ENCODE measurements at regions of chr5 and their contacts with region 1.

Region 1: DNA sequence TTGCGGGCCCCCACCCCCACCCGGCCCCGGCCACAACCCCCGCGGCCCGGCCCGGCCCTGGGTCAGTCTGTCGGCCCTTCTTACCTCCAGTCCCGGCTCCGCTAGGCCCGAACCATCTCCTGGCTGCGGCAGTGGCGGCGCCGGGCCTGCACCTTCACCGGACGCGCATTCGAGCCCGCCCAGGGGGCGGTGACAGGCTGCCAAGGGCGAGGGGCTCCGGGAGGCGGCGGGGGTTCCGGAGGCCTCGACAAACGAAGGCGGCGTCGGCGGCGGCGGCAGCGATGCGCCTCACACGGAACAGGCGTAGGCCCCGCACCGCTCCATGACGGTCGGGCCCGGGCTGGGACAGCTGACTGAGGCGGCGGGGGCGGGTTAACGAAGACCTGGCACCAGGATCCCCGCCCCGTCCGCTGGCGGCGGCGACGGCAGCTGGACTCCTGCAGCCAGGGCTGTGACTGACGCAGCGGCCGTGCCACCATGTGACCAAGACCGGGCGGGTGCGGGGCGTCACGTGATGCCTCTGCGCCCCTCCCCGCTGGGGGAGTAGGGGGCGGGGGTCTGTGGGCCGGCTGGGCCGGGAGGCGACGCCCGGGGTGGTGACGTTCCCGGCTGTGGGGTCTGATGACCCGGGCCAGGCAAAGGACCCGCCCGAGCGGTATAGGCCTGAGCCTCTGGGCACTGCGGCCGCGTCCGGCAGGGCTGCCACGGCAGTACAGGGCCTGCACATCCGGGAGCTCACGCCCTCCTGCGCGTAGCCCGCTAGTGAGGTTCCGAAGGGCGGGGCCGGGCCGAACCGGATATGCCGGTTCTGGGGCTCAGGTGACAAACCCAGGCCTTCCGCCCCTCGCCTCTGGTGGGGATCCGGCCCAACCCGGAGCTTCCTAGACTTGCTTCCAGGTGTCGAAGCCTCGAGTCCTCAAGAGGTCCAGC is at the start of gene AFF4:
- DNase-seq: peak; percentile 97
- H3K4me3 ChIP-seq: peak within 1 kb of the TSS; percentile 72 to 90 (median 82)
- H3K27ac ChIP-seq: peak within 1 kb of the TSS; percentile 98 to 100 (median 98)
- H3K4me1 ChIP-seq: peaks cover 4 to 35% (median 25%) of the 10 kb centered on the region in 4 donors
- H3K27me3 ChIP-seq: no peaks in the 10 kb centered on the region
- CTCF ChIP-seq: peak in 1 of 5 experiments; percentile 29
- EP300 ChIP-seq: peak; percentile 33
- POLR2A ChIP-seq: peak; percentile 99
- total RNA-seq, gene AFF4: 66.1 to 122 (median 85.1) TPM

Region 2: DNA sequence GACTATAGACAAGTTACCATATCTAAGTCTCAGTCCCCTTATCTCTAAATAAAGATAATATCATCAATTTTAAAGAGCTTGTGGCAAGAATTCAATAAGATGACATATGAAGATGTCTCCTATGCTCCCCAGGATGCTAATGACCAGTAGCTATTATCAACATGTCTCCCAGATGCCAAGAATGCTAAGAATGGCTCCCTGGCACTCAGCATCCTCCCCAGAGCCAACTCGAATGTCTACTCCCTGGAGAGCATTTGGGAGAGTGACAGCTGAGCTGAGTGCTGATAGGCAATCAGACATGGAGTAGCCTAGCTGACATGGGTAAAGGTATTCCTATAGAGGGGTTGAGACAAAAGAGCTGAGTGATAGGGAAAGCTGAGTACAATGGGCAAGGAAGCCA is 751.7 kb before region 1 on chr5:
- in situ Hi-C with region 1: no loop called
- intact Hi-C with region 1: loop called (anchors 5 kb)
- DNase-seq: no peak
- H3K4me3 ChIP-seq: no peak overlapping the region
- H3K27ac ChIP-seq: no peak overlapping the region
- H3K4me1 ChIP-seq: peaks cover 6 to 16% (median 7%) of the 10 kb centered on the region in 4 donors
- H3K27me3 ChIP-seq: no peaks in the 10 kb centered on the region
- CTCF ChIP-seq: no peak
- EP300 ChIP-seq: no peak
- POLR2A ChIP-seq: no peak

Region 3: GRCh38 chr5:133051580-133052332 is 88.3 kb after region 1 on chr5 and contains the start of gene HSPA4:
- in situ Hi-C with region 1: no loop called
- intact Hi-C with region 1: loop called (anchors 2 kb)
- DNase-seq: peak; percentile 99
- H3K4me3 ChIP-seq: peak within 1 kb of the TSS; percentile 37 to 94 (median 88)
- H3K27ac ChIP-seq: peak within 1 kb of the TSS; percentile 94 to 99 (median 98)
- H3K4me1 ChIP-seq: peaks cover 18 to 61% (median 39%) of the 10 kb centered on the region in 4 donors
- H3K27me3 ChIP-seq: no peaks in the 10 kb centered on the region
- CTCF ChIP-seq: peak in 1 of 5 experiments; percentile 28
- EP300 ChIP-seq: no peak
- POLR2A ChIP-seq: peak; percentile 95
- total RNA-seq, gene HSPA4: 34.4 to 52.5 (median 46.5) TPM

Measured in transverse colon (tissue), 4 donors.